Activated CD4-positive, alpha-beta T cell treated with anti-CD3 and anti-CD28 coated beads, Interleukin-2, amount 10 ng/mL, durations not matched to agents 24 days and 14 days (primary cell): ENCODE measurements at regions of chr2 and their contacts with region 1.

Region 1: GRCh38 chr2:10302479-10303180 is at the start of gene HPCAL1:
- DNase-seq: peak; percentile 96
- H3K4me3 Mint-ChIP-seq: peak within 1 kb of the TSS; percentile 99
- H3K27ac Mint-ChIP-seq: peak within 1 kb of the TSS; percentile 87
- H3K4me1 Mint-ChIP-seq: peaks cover 64% of the 10 kb centered on the region
- H3K27me3 Mint-ChIP-seq: no peaks in the 10 kb centered on the region
- total RNA-seq, gene HPCAL1: 77.1 and 82.8 TPM in 2 replicates

Region 2: GRCh38 chr2:10278029-10278762 is 24.4 kb before region 1 on chr2:
- intact Hi-C with region 1: loop called (anchors 2 kb)
- DNase-seq: peak; percentile 63
- H3K4me3 Mint-ChIP-seq: no peak overlapping the region
- H3K27ac Mint-ChIP-seq: peak overlapping the region; percentile 7
- H3K4me1 Mint-ChIP-seq: peaks cover 13% of the 10 kb centered on the region
- H3K27me3 Mint-ChIP-seq: peaks cover 8% of the 10 kb centered on the region

Region 3: DNA sequence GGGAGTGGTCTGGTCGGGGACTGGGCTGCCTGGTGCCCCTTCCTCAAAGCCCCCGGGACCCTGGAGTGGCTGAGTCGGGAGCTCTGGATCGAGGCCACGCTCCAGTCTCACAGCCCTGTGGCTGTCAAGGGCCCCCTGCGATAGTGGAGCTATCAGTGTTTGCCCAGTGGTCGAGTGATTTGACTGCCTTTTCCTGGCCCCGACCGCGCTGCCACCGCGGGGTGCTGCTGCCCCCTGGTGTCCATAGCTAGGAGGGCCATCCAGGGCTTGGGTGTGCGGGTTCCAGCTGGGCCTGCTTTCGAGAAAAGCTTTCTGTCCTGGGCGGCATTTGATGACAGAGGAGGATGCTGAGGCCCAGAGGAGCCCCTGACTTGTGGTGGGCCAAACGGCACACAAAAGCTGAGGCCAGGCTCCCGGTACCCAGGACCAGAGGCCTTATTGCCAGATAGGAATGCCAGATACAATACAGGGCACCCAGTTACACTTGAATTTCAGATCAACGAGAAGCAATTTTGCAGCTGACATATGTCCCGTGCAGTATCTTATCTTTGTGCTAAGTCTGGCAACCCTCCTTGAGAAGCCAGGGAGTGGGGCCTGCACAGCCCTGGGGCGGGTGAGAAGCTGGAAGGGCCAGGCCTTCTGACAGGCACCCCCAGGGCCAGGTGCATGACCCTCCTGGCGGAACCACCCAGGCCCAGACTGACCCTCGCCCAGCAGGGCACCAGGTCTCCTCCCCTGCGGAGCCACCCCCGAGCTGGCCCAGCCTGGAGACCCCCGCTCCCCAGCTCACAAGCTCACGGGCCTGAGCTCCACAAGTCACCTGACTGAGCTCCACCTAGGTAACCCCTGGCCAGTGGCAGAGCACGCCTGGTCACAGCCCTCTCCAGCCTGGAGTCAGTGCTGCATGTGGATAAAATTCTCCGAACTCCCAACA is 132.5 kb after region 1 on chr2:
- intact Hi-C with region 1: no loop called
- DNase-seq: peak; percentile 94
- H3K4me3 Mint-ChIP-seq: peak overlapping the region; percentile 23
- H3K27ac Mint-ChIP-seq: no peak overlapping the region
- H3K4me1 Mint-ChIP-seq: peaks cover 12% of the 10 kb centered on the region
- H3K27me3 Mint-ChIP-seq: peaks cover 4% of the 10 kb centered on the region